MCF 10A (cell line): ENCODE measurements at regions of chr19 and their contacts with region 1.

Region 1: DNA sequence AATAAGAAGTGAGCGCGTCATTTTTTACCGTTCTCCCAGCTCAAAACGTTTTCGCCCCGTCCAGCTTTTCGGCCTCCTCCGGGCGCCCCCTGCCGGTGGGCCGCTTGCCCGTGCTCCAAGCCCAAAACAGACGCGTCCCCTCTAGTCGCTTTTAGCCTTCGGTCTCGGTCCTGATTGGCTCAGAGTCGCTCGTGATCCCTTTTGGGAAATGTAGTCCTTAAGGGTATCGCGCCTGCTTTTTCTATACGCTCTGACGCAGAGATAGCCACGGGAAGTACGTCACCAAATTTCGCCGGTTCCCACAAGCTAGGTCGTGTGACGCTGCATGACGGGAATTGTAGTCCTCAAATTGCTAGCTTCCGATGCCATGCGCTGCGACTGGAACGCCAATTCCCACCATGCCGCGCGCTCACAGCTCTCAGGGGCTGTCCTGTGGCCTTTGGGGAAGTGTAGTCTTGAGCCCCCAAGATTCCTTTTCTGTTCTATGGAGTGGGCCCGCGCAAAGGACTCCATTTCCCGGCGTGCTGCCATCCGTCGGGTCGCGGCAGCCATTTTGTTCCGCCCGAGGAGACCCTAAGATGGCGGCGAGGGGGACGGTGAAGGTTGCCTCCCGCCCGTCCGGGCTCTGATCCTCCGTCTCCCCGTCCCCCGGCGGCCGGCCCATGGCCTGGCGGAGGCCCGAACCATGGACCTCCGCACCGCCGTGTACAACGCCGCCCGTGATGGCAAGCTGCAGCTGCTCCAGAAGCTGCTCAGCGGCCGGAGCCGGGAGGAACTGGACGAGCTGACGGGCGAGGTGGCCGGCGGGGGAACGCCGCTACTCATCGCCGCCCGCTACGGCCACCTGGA is at the start of gene FEM1A:
- DNase-seq: peak; percentile 100
- H3K4me3 Mint-ChIP-seq: peak within 1 kb of the TSS; percentile 79
- H3K27ac Mint-ChIP-seq: peak within 1 kb of the TSS; percentile 83
- H3K4me1 Mint-ChIP-seq: peaks cover 11% of the 10 kb centered on the region
- H3K27me3 Mint-ChIP-seq: no peaks in the 10 kb centered on the region
- CTCF ChIP-seq: peak; percentile 85
- total RNA-seq, gene FEM1A: 13.5 and 15.4 TPM in 2 replicates

Region 2: DNA sequence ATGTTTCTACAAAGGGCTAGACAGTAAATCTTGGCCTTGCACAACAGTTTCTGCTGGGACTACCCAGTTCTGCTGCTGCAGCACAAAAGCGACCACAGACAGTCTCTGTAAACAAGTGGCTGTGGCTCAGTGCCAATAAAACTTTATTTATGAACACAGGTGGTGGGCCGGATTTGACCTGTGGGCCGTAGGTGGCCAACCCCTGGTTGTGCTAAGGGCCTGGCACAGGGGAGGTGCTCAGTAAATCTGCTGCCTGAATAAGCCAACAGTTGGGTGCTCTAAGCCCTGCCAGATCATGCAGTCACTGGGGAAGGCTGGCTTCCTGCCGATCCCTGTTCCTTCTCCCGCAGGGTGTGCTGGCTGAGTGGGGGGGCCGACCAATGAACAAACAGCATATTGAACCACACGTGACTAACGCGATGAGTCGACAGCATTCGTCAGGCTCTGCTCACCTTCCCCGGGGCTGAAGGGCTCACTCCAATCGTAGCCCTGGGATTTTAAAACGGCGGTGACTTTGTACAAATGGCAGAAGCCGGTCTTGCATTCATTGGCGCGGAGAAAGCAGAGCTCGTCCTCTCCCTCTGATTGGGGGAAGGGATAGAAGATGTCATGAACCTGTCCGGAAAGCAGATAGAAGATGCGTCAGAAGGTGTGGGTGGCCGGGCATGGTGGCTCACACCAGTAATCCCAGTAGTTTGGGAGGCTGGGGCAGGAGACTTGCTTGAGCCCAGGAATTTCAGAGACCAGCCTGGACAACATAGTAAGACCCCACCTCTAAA is 97.0 kb before region 1 on chr19:
- CTCF ChIA-PET with region 1: interaction called, 6 read pairs
- POLR2A ChIA-PET with region 1: interaction called, 10 read pairs
- intact Hi-C with region 1: no loop called
- DNase-seq: peak; percentile 100
- H3K4me3 Mint-ChIP-seq: peak overlapping the region; percentile 70
- H3K27ac Mint-ChIP-seq: peak overlapping the region; percentile 93
- H3K4me1 Mint-ChIP-seq: peaks cover 26% of the 10 kb centered on the region
- H3K27me3 Mint-ChIP-seq: no peaks in the 10 kb centered on the region
- CTCF ChIP-seq: no peak

Region 3: DNA sequence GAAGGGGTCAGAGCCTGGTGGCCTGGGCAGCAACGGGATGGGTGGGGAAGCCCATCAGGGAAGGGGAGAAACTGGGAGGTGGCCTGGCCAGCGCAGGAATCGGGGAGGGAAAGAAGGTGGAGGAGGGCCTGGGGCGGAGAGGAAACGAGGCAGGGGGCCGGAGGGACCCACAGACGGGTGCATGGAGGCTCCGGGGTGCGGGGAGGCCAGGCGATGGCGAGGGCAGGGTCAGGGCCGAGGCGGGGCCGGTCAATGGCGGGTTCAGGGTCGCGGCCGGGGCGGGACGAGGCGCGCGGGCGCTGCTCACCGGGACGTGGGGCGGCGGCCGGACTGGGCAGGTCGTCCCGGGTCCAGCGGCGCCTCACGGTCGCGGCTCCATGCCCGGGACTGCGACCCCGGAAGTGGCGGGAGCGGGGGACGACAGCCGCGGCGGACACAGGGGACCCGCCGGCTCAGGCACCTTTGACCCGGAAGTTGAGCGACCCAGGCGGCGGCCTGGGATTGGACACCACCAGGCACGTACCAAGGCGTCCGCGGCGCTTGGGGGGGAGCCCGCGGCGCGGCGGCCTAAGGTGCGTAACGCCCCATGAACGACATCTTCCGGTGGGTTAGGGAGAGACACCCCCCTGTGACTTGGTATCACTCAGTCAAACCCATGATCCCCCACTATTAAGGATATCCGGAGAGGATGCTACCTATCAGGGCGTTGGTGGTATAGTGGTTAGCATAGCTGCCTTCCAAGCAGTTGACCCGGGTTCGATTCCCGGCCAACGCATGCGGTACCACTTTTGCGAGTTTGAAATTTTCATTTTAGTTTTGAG is 67.8 kb before region 1 on chr19 and contains the start of gene DPP9:
- CTCF ChIA-PET with region 1: interaction called, 17 read pairs
- POLR2A ChIA-PET with region 1: interaction called, 56 read pairs
- intact Hi-C with region 1: loop called (anchors 2 kb)
- DNase-seq: peak; percentile 99
- H3K4me3 Mint-ChIP-seq: peak within 1 kb of the TSS; percentile 93
- H3K27ac Mint-ChIP-seq: peak within 1 kb of the TSS; percentile 73
- H3K4me1 Mint-ChIP-seq: peaks cover 20% of the 10 kb centered on the region
- H3K27me3 Mint-ChIP-seq: no peaks in the 10 kb centered on the region
- CTCF ChIP-seq: no peak
- total RNA-seq, gene DPP9: 90.6 and 100 TPM in 2 replicates

Region 4: DNA sequence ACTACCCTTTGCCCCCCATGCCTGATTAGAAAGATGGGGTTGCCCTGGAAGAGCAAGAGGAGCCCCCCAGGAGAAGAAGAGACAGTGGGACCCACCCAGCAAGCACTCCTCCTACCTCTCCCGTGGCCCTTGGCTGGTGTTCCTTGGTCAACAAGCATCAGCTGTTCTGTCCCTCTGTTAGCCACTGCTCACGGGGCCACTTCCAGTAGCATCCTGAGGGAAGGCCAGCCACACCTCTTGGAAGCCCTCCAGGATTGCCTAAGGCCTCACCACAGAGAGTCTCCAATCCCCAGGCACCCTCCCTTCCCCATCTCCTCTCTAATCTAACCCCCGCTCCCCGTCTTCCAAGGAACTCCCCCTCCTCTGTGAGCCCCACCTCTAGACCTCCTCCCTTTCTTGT is 52.7 kb before region 1 on chr19:
- CTCF ChIA-PET with region 1: interaction called, 46 read pairs
- POLR2A ChIA-PET with region 1: interaction called, 20 read pairs
- intact Hi-C with region 1: no loop called
- DNase-seq: peak; percentile 27
- H3K4me3 Mint-ChIP-seq: no peak overlapping the region
- H3K27ac Mint-ChIP-seq: no peak overlapping the region
- H3K4me1 Mint-ChIP-seq: peaks cover 7% of the 10 kb centered on the region
- H3K27me3 Mint-ChIP-seq: peaks cover 6% of the 10 kb centered on the region
- CTCF ChIP-seq: no peak

Region 5: DNA sequence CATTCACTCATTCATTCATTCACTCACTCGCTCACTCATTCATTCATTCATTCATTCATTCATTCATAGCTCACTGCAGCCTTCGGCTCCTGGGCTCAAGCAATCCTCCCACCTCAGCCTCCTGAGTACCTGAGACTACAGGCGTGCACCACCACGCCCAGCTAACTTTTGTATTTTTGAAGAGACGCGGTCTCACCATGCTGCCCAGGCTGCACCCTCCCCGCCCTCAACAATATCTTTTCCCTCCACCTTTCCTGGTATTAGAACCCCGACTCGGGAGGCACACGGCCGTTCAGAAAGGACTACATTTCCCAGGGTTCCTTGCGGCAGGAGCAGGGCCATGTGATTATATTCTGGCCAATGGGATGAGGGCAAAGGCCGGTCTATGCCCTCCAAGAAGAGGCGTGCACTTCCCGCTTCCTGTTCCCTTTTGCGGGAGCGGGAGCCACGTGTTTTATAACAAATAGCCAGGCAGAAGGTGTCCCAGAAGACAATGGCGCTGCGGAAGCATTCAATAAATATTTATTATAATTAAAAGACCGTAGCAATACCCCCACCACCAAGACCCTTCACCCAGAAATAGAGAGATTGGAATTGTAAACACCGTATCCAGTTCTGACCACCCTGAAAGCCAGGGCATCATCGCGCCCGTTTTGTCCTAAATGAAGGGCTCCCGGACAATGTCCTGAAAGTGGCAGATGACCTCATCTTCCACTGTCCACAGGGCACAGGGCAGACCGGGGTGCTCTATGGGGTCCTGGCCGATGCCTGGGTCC is 24.2 kb after region 1 on chr19:
- CTCF ChIA-PET with region 1: no interaction called
- POLR2A ChIA-PET with region 1: interaction called, 12 read pairs
- intact Hi-C with region 1: no loop called
- DNase-seq: peak; percentile 95
- H3K4me3 Mint-ChIP-seq: peak overlapping the region; percentile 29
- H3K27ac Mint-ChIP-seq: no peak overlapping the region
- H3K4me1 Mint-ChIP-seq: peaks cover 31% of the 10 kb centered on the region
- H3K27me3 Mint-ChIP-seq: no peaks in the 10 kb centered on the region
- CTCF ChIP-seq: no peak

Region 6: DNA sequence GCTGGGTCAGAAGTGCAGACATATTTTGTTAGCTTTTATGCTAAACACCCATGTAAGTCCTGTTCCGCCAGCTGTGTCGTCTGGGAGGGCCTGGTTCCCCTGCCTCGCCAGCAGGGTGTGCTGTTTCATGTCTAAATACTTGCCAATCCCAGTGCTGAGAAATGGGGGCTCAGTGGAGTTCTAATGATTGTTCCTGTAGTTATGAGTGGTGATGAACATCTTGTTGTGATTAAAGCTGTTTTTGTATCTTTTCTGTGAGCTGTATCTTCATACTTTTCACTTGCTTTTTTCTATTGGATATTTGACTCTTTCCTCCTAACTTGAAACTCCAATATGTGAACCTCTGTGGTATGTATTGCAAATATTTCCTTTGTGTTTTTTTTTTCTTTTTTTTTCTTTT is 210.2 kb after region 1 on chr19:
- CTCF ChIA-PET with region 1: no interaction called
- POLR2A ChIA-PET with region 1: no interaction called
- intact Hi-C with region 1: no loop called
- DNase-seq: peak; percentile 58
- H3K4me3 Mint-ChIP-seq: no peak overlapping the region
- H3K27ac Mint-ChIP-seq: peak overlapping the region; percentile 90
- H3K4me1 Mint-ChIP-seq: peaks cover 7% of the 10 kb centered on the region
- H3K27me3 Mint-ChIP-seq: no peaks in the 10 kb centered on the region
- CTCF ChIP-seq: peak; percentile 41

Region 7: GRCh38 chr19:5031231-5032100 is 240.1 kb after region 1 on chr19:
- CTCF ChIA-PET with region 1: no interaction called
- POLR2A ChIA-PET with region 1: no interaction called
- intact Hi-C with region 1: no loop called
- DNase-seq: peak; percentile 82
- H3K4me3 Mint-ChIP-seq: no peak overlapping the region
- H3K27ac Mint-ChIP-seq: no peak overlapping the region
- H3K4me1 Mint-ChIP-seq: no peaks in the 10 kb centered on the region
- H3K27me3 Mint-ChIP-seq: no peaks in the 10 kb centered on the region
- CTCF ChIP-seq: peak; percentile 95